OCI-LY7 (cell line): ENCODE measurements at regions of chr19 and their contacts with region 1.

Region 1: DNA sequence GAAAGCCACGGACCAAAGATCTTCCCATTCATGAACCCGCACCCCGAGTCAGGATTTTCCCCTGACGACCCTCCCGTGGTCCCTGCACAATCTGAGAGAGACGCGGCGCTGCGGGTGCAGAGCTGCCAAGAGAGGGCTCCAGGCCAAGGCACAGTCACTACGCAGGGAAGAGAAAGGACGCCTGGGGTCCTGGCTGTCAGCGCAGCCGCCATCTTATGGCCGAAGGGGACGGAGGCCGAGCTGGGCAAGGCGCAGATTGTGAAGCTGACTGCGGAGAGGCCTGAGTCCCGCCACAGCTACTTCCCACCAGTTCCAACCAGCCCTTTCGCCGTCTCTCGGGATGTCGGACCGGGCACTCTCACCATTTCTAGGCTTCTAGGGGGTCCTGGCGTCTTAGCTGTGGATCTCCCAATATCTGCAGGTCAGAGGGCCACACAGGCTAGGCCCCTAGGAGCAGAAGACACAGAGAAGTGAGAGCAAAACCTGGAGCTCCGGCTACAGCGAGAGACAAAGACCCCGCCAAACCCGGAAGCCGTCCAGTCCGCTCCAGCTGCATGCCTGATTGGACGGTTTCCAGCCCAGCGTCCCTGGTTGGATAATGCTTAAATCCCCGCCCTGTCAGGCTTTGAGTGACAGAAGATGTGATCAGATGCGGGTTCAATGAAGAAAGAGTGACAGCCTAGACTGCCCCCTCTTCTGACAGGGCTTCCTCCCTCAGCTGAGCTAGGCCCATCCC is at the start of gene ZNF100:
- DNase-seq: peak; percentile 96
- H3K4me3 ChIP-seq: peak within 1 kb of the TSS; percentile 90
- H3K27ac ChIP-seq: peak within 1 kb of the TSS; percentile 78
- H3K4me1 ChIP-seq: peaks cover 15% of the 10 kb centered on the region
- CTCF ChIP-seq: no peak
- total RNA-seq, gene ZNF100: 19.1 and 25.0 TPM in 2 replicates

Region 2: DNA sequence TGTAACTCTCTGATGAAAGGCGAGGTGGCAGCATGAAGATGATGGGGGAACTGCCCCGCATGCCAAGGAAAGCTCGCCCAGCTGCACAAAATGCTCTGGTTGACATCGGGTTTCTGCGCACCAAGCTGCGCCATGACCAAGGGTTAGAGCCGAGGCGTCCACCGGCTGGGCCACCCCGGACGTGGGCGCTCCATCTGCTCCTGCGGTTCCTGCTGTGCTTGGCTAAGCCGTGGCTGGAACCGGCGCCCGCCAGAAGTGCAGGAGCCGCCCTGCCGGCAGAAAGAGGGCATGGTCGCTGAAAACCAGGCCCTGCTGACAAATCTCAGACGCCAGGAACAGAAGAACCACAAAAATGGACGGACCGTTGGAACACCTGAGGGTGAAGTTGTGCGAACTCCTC is 57.8 kb before region 1 on chr19:
- CTCF ChIA-PET with region 1: no interaction called
- POLR2A ChIA-PET with region 1: no interaction called
- intact Hi-C with region 1: no loop called
- DNase-seq: no peak
- H3K4me3 ChIP-seq: no peak overlapping the region
- H3K27ac ChIP-seq: no peak overlapping the region
- H3K4me1 ChIP-seq: no peaks in the 10 kb centered on the region
- CTCF ChIP-seq: no peak

Region 3: GRCh38 chr19:21851596-21852345 is 84.5 kb after region 1 on chr19:
- CTCF ChIA-PET with region 1: no interaction called
- POLR2A ChIA-PET with region 1: interaction called, 10 read pairs
- intact Hi-C with region 1: no loop called
- DNase-seq: peak; percentile 96
- H3K4me3 ChIP-seq: peak overlapping the region; percentile 92
- H3K27ac ChIP-seq: peak overlapping the region; percentile 52
- H3K4me1 ChIP-seq: peaks cover 20% of the 10 kb centered on the region
- CTCF ChIP-seq: no peak